ENCODE measurements at regions of chr5 and their contacts with region 1.

Region 1: DNA sequence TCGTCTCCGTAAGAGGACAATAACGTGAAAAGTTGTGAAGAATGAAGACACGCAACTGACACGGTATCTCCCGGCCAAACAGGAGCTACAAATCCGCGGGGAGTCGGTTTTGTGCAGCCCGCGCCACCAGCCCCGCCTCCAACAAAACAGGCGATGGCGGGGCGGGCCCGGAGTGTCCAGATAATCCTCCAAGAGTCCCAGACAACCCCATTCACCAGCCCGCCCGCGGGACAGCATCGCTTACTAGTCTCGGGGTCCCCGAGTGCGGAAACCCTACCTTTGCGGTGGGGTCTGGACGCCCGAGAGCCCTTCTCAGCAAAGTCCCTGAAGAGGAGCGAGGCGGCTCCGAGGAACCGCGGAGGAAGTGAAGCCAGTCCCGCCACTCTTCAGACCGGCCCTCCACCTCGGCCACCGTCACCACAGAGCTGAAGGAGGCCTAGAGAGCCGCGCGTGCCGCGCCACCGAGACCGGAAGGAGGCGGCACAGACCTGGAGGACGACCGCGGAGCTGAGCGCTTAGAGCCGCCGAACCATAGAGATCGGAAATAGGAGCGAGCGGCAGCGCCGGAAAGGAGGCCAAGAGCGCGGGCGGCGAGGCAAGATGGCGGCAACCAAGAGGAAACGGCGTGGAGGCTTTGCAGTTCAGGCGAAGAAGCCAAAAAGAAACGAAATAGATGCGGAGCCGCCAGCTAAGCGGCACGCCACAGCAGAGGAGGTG is at the starts of genes BRIX1 and RAD1:
- DNase-seq: peak; percentile 83

Region 2: GRCh38 chr5:34562791-34563190 is 352.5 kb before region 1 on chr5:
- CTCF ChIA-PET with region 1: no interaction called
- POLR2A ChIA-PET with region 1: no interaction called
- DNase-seq: no peak

Region 3: DNA sequence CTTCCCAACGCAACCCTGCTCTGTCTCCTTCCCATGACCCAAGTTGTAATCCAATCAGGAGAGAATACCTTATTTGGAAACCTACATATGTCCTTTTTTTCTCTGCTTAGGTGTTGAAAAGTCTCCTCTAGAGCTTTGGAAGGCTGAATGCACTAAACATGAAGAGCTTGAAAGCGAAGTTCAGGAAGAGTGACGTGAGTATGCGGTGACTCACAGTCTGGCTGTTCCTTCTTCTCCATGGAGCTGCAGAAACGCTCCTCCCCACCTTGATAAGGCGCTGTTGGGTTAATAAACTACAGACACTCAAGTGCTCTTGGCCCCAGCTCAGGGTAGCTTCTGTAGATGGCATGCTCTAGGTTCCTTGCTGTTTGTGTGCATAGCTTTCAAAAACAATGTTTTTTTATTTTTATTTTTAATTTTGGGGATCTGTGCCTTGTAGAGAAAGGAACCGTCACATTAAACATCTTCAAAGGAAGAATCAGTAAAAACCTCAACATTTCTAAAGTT is 228.5 kb before region 1 on chr5:
- CTCF ChIA-PET with region 1: no interaction called
- POLR2A ChIA-PET with region 1: interaction called, 17 read pairs
- DNase-seq: peak; percentile 58

Region 4: DNA sequence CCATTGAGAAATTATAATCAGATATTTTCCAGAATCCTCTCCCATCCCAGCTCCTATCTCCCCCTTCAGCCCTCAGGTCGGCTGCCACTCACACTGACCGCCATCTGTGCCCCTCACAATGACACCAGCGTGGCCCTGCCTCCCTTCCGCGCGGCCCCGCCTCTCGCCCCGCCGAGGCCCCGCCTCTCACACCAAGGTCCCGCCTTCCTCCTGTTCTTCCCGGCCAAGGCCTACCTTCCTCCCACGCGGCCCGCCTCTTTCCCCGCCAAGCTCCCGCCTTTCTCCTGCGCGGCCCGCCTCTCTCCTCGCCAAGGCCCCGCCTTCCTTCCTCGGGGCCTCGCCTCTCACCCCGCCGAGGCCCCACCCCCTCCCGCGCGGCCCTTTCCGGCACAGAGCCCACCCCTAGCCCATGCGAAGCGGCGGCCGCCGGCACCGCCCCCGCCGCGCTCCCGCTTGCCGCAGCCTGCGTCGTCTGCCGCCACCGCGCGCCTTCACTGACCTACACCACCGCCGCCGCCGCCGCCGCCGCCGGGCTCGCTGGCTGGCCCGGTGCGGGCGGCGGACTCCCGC is 13.9 kb after region 1 on chr5 and contains the start of gene DNAJC21:
- CTCF ChIA-PET with region 1: interaction called, 3 read pairs
- POLR2A ChIA-PET with region 1: interaction called, 65 read pairs
- DNase-seq: peak; percentile 97

Region 5: DNA sequence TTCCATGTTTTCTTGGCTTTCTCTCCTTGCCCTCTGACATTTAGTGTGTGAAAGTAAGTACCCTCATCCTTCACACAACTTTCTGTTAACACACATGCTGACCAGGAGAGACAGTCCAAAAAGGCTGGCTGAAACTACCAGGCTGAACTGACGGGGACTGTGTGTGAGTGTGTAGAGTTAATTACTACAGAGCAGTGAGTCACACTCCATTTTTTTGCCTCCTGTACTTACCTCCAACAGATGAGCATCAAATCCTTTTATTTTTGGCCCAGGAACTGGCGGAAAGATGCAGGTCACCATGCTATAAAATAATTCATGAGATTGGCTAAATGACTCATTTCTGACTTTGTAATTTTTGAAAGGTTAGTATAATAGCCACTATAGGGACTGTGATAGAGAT is 152.7 kb after region 1 on chr5:
- CTCF ChIA-PET with region 1: no interaction called
- POLR2A ChIA-PET with region 1: no interaction called
- DNase-seq: no peak